ENCODE measurements at regions of chr11 and their contacts with region 1.

Region 1: DNA sequence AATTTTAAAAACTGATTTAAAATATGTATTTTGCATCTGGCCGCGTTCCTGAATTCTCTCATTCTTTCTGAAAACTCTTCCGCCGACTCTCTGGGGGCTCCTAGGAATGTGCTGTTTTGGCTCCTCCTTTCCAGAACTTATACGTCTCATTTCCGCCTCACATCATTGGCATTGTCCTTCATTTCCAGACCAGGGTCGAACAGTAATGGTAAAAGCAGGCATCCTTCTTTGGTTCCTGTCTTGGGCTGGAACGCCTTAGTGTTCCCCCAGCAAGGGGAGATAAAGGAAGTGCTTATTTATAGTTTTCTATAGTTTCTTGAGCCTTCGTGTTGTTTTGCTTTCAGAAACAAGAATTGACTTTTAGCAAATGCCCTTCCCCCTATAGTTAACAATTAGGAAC is 10.9 kb upstream of the TNNT3 start:
- DNase-seq: no peak
- ATAC-seq: no peak
- H3K4me3 ChIP-seq: no peak overlapping the region
- H3K27ac ChIP-seq: no peak overlapping the region
- H3K4me1 ChIP-seq: no peaks in the 10 kb centered on the region
- H3K27me3 ChIP-seq: peaks cover 38% of the 10 kb centered on the region
- CTCF ChIP-seq: no peak

Region 2: GRCh38 chr11:1674173-1675131 is 234.2 kb before region 1 on chr11:
- CTCF ChIA-PET with region 1: no interaction called
- POLR2A ChIA-PET with region 1: interaction called, 15 read pairs
- intact Hi-C with region 1: no loop called
- DNase-seq: no peak
- ATAC-seq: no peak
- H3K4me3 ChIP-seq: no peak overlapping the region
- H3K27ac ChIP-seq: no peak overlapping the region
- H3K4me1 ChIP-seq: no peaks in the 10 kb centered on the region
- H3K27me3 ChIP-seq: peaks cover 62% of the 10 kb centered on the region
- CTCF ChIP-seq: no peak

Region 3: GRCh38 chr11:2233693-2234455 is 325.3 kb after region 1 on chr11:
- CTCF ChIA-PET with region 1: no interaction called
- POLR2A ChIA-PET with region 1: no interaction called
- intact Hi-C with region 1: no loop called
- DNase-seq: no peak
- ATAC-seq: no peak
- H3K4me3 ChIP-seq: no peak overlapping the region
- H3K27ac ChIP-seq: no peak overlapping the region
- H3K4me1 ChIP-seq: no peaks in the 10 kb centered on the region
- H3K27me3 ChIP-seq: peaks cover 28% of the 10 kb centered on the region
- CTCF ChIP-seq: no peak